RWPE1 (cell line): ENCODE measurements at regions of chr1 and their contacts with region 1.

Region 1: DNA sequence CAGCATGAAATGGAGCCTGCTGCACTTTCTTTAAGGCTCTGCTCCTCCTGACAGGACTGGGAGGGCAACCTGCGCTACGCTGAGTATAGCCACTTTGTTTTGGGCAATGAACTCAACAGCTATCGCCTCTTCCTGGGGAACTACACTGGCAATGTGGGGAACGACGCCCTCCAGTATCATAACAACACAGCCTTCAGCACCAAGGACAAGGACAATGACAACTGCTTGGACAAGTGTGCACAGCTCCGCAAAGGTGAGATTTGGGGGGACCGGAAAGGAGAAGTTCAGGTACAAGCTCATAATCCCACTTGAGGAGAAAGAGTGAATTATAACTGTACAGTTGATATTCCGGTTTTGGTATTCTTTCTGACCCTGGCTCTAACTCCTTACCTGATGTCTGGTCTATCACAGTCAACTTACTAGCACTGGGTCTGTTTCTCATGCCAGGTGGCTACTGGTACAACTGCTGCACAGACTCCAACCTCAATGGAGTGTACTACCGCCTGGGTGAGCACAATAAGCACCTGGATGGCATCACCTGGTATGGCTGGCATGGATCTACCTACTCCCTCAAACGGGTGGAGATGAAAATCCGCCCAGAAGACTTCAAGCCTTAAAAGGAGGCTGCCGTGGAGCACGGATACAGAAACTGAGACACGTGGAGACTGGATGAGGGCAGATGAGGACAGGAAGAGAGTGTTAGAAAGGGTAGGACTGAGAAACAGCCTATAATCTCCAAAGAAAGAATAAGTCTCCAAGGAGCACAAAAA is 5.4 kb downstream of the ANGPTL7 start:
- DNase-seq: no peak
- H3K27ac ChIP-seq: no peak overlapping the region
- CTCF ChIP-seq: no peak

Region 2: GRCh38 chr1:11099310-11100149 is 95.1 kb before region 1 on chr1 and contains the start of gene EXOSC10:
- CTCF ChIA-PET with region 1: interaction called, 11 read pairs
- POLR2A ChIA-PET with region 1: no interaction called
- DNase-seq: peak; percentile 97
- H3K27ac ChIP-seq: peak within 1 kb of the TSS; percentile 83
- CTCF ChIP-seq: no peak

Region 3: DNA sequence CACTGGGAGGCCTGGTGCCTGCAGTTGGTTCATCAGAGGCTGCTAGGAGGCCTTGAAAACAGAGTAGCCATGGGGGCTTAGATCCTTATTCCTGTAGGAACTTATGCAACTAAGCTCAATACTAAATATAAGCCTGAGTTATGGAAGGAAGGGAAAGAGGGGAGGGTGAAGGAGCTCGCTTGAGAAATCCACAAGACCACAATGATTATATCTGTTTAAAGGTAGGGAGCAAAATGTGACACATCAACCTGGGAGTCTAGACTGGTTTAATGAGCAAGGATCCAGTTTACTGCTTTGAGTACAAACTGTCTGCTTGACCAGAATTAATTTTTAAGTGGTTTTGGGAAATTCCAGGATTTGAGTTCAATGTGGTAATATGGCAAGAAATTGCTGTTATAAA is 25.9 kb before region 1 on chr1:
- CTCF ChIA-PET with region 1: no interaction called
- POLR2A ChIA-PET with region 1: no interaction called
- DNase-seq: no peak
- H3K27ac ChIP-seq: no peak overlapping the region; the same call in 1 of the 2 replicates
- CTCF ChIP-seq: no peak

Region 4: DNA sequence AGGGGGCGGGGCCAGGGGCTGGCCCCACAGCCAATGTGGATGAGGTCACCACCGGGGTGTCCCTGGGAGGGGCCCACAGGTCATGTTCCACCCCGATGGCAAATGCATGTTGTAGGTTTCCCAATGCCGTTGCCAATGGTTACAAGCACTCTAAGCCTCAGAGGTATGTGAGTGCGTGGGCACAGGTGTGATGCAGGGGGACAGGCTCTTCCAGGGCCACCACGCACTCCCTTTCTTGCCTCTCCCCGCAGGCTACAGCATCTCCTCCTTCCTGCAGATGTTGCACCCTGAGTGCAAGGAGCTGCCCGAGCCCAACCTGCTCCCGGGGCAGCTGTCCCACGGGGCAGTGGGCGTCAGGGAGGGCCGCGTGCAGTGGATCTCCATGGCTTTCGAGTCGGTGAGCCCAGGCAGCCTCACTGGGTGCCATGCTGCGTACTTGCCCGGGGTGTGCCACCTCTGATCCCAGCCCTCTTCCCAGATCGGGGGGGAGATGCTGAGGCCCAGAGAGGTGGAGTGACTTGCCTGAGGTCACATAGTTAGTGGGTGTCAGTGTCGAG is 336.8 kb after region 1 on chr1:
- CTCF ChIA-PET with region 1: no interaction called
- POLR2A ChIA-PET with region 1: no interaction called
- DNase-seq: peak; percentile 71
- H3K27ac ChIP-seq: no peak overlapping the region
- CTCF ChIP-seq: no peak